B cell (primary cell): ENCODE measurements at regions of chr1 and their contacts with region 1.

Region 1: DNA sequence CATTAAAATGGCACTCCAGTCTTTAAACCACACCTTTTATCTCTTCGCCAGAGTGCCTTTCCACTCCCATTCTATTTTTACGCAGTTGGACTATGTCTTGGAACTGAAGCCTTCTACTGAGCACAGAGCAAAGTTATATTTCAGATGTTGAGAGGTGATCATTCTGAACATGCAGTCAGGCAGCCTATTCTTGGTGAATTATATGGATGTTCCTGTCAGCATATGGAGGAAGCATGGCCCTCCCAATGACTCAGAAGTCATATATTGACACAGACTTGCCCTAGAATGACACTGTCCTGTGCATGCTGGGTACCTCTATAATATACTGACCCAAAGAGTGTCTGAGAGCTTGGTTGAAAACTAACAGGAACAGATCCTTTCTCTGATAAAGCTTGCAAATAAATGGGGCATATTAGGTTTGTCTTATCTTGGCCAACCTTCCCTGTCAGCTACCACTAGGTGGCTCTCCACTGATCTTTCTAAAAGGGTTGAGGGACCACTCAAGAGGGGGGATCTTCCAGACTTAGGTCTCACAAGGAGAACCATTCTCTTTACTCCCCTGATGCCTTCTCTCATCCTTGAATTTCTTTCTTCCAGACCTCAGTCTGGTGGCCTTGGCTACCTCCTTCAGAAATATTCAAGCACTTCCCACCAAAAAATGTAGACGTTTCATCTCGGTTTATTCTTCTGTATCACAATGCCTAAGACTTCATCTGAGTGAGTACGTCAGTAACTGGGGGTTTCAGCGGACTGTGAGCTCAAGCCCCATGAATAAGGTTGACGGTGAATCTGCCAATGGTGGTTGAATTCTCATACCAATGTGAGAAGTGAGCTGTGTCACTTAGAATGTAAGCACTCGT is 11.8 kb upstream of the ALG14 start:
- DNase-seq: peak; percentile 67
- ATAC-seq: peak; percentile 78
- H3K4me3 ChIP-seq: no peak overlapping the region
- H3K4me3 Mint-ChIP-seq: no peak overlapping the region
- H3K27ac ChIP-seq: no peak overlapping the region
- H3K27ac Mint-ChIP-seq: no peak overlapping the region
- H3K4me1 ChIP-seq: no peaks in the 10 kb centered on the region
- H3K4me1 Mint-ChIP-seq: no peaks in the 10 kb centered on the region
- H3K27me3 ChIP-seq: peaks cover 0 to 4% (median 0%) of the 10 kb centered on the region in 4 experiments
- H3K27me3 Mint-ChIP-seq: peaks cover 10% of the 10 kb centered on the region
- CTCF ChIP-seq: peak; percentile 81

Region 2: GRCh38 chr1:95095833-95096217 is 11.3 kb after region 1 on chr1:
- CTCF ChIA-PET with region 1: interaction called, 12 read pairs
- POLR2A ChIA-PET with region 1: no interaction called
- intact Hi-C with region 1: no loop called
- DNase-seq: peak; percentile 15
- ATAC-seq: no peak
- H3K4me3 ChIP-seq: no peak overlapping the region
- H3K4me3 Mint-ChIP-seq: no peak overlapping the region
- H3K27ac ChIP-seq: no peak overlapping the region
- H3K27ac Mint-ChIP-seq: no peak overlapping the region
- H3K4me1 ChIP-seq: no peaks in the 10 kb centered on the region
- H3K4me1 Mint-ChIP-seq: peaks cover 5% of the 10 kb centered on the region
- H3K27me3 ChIP-seq: no peaks in the 10 kb centered on the region
- H3K27me3 Mint-ChIP-seq: peaks cover 17% of the 10 kb centered on the region
- CTCF ChIP-seq: no peak

Region 3: DNA sequence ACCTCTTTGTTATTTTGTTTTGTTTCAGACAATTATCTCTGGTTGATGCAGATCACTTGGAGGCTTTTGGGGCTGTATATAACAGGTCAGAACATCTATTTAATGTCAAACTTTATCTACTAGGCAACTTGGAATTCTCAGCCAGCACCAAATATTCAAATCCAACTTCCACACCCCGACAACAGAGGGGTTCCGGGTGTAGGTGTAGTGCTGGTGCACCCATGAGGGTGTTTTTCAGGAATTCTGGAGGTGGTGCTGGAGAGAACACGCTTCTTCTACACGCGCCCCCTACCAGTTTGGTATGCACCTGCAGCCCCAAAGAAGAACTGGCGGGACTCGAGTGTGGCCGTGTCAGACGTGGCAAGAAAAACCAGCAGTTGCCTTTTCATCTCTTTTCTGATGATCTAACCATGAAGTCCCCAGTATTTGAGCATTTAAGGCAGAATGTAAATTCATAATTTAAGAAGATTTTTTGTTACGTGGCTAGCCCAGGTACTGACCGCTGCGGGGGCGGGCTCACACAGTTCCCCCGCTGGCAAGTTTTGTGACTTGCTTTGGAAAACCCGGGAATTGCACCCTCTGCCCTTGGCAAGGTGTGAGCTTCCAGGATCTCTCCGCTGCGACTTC is 32.1 kb after region 1 on chr1:
- CTCF ChIA-PET with region 1: interaction called, 11 read pairs
- POLR2A ChIA-PET with region 1: no interaction called
- intact Hi-C with region 1: no loop called
- DNase-seq: peak; percentile 74
- ATAC-seq: peak; percentile 83
- H3K4me3 ChIP-seq: peak overlapping the region; percentile 19 to 88 (median 74)
- H3K4me3 Mint-ChIP-seq: peak overlapping the region; percentile 97
- H3K27ac ChIP-seq: peak overlapping the region in 1 of 2 donors; percentile 35
- H3K27ac Mint-ChIP-seq: peak overlapping the region; percentile 90
- H3K4me1 ChIP-seq: peaks cover 5 to 10% of the 10 kb centered on the region in 2 donors
- H3K4me1 Mint-ChIP-seq: peaks cover 11% of the 10 kb centered on the region
- H3K27me3 ChIP-seq: peaks cover 0 to 29% (median 17%) of the 10 kb centered on the region in 4 experiments
- H3K27me3 Mint-ChIP-seq: peaks cover 49% of the 10 kb centered on the region
- CTCF ChIP-seq: peak; percentile 74